Cardiac septum (tissue), 1 donor: ENCODE measurements at regions of chr4 and their contacts with region 1.

Region 1: GRCh38 chr4:2418650-2419571 is at the start of gene CFAP99:
- DNase-seq: peak; percentile 98
- total RNA-seq, gene CFAP99: not detected

Region 2: DNA sequence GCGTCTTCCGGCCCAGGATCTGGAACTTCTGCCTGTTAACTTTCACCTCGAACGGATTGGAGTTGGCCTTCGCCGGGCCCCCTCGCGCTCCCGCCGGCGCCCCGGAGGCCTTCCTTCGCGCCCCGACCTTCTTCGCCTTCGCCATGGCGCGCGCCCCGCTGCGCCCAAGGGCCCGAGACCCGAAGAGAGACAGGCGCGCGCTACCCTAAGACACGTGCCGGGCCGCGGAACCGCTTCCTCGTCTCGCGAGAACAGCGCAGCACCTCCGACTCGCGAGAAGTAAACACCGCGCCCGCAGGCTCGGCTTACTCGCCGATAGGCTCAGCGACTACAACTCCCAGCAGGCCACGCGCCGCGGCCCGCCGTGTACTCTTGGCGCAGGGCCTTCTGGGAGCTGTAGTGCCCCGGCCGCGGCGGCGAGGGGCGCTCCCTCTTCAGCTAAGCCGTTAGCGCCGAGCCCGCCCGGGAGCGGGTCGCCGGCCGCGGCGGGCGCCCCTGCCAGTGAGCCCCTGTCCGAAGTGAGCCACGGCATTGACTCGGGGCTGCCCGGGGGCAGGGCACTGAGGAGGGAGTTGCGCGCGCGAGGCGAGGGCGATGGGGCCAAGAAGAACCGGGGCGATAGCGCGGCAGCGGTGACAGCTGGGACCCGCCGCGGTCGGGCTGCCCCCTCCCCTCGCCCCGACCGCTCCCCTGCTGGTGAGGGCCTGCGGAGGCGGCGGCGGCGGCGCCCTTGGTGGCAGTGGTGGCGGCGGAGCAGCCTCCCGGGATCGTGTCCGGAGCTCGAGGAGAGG is 544.5 kb after region 1 on chr4 and contains the starts of genes GRK4 and NOP14:
- intact Hi-C with region 1: loop called (anchors 5 kb)
- DNase-seq: peak; percentile 99
- total RNA-seq, gene GRK4: 13.5 TPM
- total RNA-seq, gene NOP14: 16.1 TPM